ENCODE measurements at regions of chr20 and their contacts with region 1.

Region 1: DNA sequence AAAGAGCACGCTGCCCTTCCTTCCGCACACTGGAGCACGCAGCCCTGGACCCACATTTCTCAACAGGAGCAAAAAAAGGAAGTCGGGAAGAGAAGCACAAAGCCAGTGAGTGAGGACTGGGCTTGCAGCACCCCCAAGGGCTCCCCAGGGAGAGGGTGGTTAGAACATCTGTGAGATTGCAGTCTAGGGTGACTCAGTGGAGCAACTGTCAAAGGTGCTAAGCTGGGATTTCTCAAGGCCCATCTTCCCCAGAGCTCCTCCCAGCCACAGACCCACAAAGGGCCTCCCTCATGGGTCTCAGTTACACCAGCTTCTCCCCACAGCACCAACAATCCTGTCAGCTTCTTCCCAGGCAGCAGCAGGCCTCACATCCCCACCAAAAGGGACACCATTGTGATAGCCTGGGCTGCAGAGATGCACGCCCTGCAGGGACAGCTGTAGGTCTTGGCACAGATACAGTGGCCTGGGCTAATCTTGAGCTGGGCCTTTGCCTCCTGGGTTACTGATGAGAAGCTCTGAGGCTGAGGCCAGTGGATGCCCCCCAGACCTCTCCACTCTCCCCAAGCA is 39.6 kb upstream of the CD93 start:
- DNase-seq: no peak
- ATAC-seq: peak; percentile 28
- H3K4me3 ChIP-seq: no peak overlapping the region
- H3K27ac ChIP-seq: no peak overlapping the region
- H3K4me1 ChIP-seq: peaks cover 14% of the 10 kb centered on the region
- H3K27me3 ChIP-seq: no peaks in the 10 kb centered on the region
- CTCF ChIP-seq: no peak
- EP300 ChIP-seq: no peak
- POLR2A ChIP-seq: no peak
- RAD21 ChIP-seq: no peak

Region 2: GRCh38 chr20:23079016-23079351 is 46.7 kb before region 1 on chr20:
- CTCF ChIA-PET with region 1: interaction called, 10 read pairs
- POLR2A ChIA-PET with region 1: no interaction called
- RAD21 ChIA-PET with region 1: no interaction called
- SMC1A ChIA-PET with region 1: interaction called, 3 read pairs
- in situ Hi-C with region 1: no loop called
- intact Hi-C with region 1: no loop called
- DNase-seq: no peak
- ATAC-seq: no peak
- H3K4me3 ChIP-seq: no peak overlapping the region
- H3K27ac ChIP-seq: no peak overlapping the region
- H3K4me1 ChIP-seq: no peaks in the 10 kb centered on the region
- H3K27me3 ChIP-seq: peaks cover 0 to 3% of the 10 kb centered on the region in 2 experiments; a peak in 1 of 4 replicates
- CTCF ChIP-seq: peak; percentile 25 to 50 (median 47); a peak in 3 of 6 replicates
- EP300 ChIP-seq: no peak
- POLR2A ChIP-seq: no peak
- RAD21 ChIP-seq: peak; percentile 31

Region 3: GRCh38 chr20:23147964-23148730 is 22.4 kb after region 1 on chr20:
- CTCF ChIA-PET with region 1: interaction called, 4 read pairs
- POLR2A ChIA-PET with region 1: interaction called, 6 read pairs
- RAD21 ChIA-PET with region 1: interaction called, 16 read pairs
- SMC1A ChIA-PET with region 1: interaction called, 28 read pairs
- in situ Hi-C with region 1: no loop called
- intact Hi-C with region 1: no loop called
- DNase-seq: peak; percentile 74
- ATAC-seq: peak; percentile 84
- H3K4me3 ChIP-seq: no peak overlapping the region
- H3K27ac ChIP-seq: peak overlapping the region; percentile 68
- H3K4me1 ChIP-seq: peaks cover 30% of the 10 kb centered on the region
- H3K27me3 ChIP-seq: no peaks in the 10 kb centered on the region
- CTCF ChIP-seq: no peak
- EP300 ChIP-seq: no peak
- POLR2A ChIP-seq: peak; percentile 66
- RAD21 ChIP-seq: no peak